Activated CD4-positive, alpha-beta T cell treated with anti-CD3 and anti-CD28 coated beads for 36 hours (primary cell): ENCODE measurements at regions of chr1 and their contacts with region 1.

Region 1: GRCh38 chr1:24201941-24202440 is 14.9 kb upstream of the IFNLR1 start:
- DNase-seq: peak; percentile 78
- ATAC-seq: no peak
- H3K4me3 Mint-ChIP-seq: no peak overlapping the region
- H3K27ac Mint-ChIP-seq: no peak overlapping the region
- H3K4me1 Mint-ChIP-seq: peaks cover 27% of the 10 kb centered on the region
- H3K27me3 Mint-ChIP-seq: peaks cover 2% of the 10 kb centered on the region

Region 2: GRCh38 chr1:24070821-24071393 is 131.1 kb before region 1 on chr1:
- CTCF ChIA-PET with region 1: interaction called, 5 read pairs
- POLR2A ChIA-PET with region 1: no interaction called
- intact Hi-C with region 1: loop called in 1 of 2 experiments (anchors 2 kb)
- DNase-seq: peak; percentile 87
- ATAC-seq: peak; percentile 97
- H3K4me3 Mint-ChIP-seq: no peak overlapping the region
- H3K27ac Mint-ChIP-seq: no peak overlapping the region
- H3K4me1 Mint-ChIP-seq: peaks cover 4% of the 10 kb centered on the region
- H3K27me3 Mint-ChIP-seq: peaks cover 6% of the 10 kb centered on the region

Region 3: DNA sequence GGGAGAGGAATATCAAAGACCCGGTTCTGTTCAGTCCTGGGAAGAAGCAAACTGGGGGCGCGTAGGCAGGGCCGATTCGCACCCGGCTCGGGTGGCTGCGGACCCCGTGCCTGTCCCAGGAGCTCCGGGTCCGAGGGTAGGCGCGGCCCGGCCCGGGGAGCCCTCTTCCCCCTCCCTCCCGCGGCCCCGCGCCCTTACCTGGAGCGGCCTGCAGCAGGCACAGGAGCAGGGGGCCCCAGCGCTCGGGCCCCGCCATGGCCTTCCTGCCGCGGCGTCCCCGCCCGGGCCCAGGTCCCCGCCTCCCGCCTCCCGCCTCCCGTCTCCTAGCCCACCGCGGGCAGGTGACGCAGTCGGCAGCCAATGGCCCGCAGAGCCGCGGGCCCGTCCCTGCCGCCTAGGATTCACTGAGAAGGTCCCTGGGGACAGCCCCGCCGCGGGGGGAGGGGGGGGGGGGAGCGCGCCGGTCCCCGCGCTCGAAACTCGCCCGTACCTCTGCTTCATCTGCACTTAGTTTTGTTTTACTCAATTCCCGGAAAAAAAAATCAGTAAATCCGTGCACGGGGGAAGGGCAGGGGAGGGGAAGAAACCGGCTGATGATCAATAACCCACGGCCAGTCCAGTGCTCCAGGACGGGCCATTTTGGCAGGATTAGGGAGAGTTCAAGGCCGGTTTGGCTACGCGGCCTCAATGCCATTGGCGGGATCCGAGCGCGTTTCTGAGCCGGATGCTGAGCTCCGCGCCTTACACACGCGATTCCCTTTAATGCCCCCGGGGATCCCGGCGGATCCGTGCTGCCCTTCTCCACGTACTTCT is 14.8 kb before region 1 on chr1 and contains the start of gene IFNLR1:
- CTCF ChIA-PET with region 1: interaction called, 22 read pairs
- POLR2A ChIA-PET with region 1: no interaction called
- intact Hi-C with region 1: no loop called
- DNase-seq: peak; percentile 93
- ATAC-seq: peak; percentile 88
- H3K4me3 Mint-ChIP-seq: peak within 1 kb of the TSS; percentile 73
- H3K27ac Mint-ChIP-seq: peak within 1 kb of the TSS; percentile 71
- H3K4me1 Mint-ChIP-seq: peaks cover 47% of the 10 kb centered on the region
- H3K27me3 Mint-ChIP-seq: no peaks in the 10 kb centered on the region
- total RNA-seq, gene IFNLR1: 6.6 to 7.4 TPM

Region 4: DNA sequence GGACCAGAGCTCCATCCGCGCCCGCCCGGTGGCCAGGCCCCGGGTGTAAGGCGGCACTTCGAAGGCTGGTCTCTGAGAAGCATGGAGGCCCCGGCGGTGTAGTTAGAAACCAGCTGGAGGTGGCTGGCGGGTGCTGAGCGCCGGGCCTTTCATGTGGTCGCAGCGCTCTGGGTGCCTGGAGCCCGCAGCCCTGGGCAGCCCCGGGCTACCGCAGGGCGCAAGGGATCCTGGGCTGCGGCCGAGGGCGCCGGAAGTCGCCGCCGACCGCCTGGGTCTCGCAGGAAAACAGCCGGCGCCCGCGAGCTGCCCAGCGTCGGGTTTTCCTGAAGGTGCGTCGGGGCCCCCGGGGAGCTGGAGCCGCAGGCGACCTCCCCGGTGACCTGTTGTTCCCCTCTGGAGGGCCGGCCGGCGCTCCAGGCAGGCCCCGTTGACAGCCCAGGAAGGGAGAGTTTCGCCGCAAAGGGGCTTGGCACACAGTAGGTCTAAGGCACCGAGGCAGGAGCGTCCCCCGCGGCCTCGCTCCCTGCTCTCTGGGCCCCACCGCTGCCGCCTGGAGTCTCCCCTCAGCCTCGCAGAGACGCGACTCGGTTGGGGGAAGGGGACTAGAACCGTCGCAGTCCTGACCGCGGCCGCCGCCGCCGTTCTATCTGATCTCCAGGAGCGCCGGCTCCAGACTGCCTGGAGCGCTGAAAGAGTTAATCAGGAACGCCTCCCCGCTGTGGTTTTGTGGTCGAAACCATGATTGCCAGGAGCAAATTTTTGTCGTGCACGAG is 119.9 kb after region 1 on chr1:
- CTCF ChIA-PET with region 1: interaction called, 22 read pairs
- POLR2A ChIA-PET with region 1: no interaction called
- intact Hi-C with region 1: loop called (anchors 5 kb)
- DNase-seq: peak; percentile 87
- ATAC-seq: peak; percentile 76
- H3K4me3 Mint-ChIP-seq: peak overlapping the region; percentile 62
- H3K27ac Mint-ChIP-seq: peak overlapping the region; percentile 51
- H3K4me1 Mint-ChIP-seq: peaks cover 40% of the 10 kb centered on the region
- H3K27me3 Mint-ChIP-seq: peaks cover 70% of the 10 kb centered on the region

Region 5: DNA sequence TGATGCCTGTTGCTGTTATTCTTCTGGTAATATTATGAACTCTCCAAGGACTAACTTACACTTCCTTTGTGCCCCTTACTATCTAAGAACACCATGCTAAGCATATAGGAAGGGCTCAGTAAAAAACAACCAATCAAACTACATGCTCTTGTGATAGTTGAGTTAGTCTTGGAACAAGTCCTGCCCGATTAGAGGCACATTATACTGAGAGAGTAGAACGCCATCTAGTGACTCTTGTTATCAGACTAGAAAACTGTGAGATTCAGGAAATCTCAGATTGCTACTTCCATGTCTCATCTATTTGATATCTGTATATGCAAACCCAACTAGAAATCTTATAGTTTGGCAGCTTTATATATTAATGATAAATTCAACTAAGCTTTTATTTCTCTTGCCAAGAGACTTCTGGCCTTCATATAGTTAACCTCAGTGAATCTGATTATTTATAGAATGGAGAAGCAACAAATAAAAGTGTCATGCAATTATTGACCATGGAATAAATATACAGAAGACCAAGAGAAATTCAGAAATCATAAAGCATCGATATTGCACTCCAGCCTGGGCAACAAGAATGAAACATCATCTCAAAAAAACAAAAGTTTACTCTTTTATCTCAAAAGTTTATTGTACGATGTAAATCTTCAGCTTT is 433.3 kb after region 1 on chr1:
- CTCF ChIA-PET with region 1: interaction called, 3 read pairs
- POLR2A ChIA-PET with region 1: no interaction called
- intact Hi-C with region 1: loop called (anchors 1 to 2 kb)
- DNase-seq: no peak
- ATAC-seq: peak; percentile 84
- H3K4me3 Mint-ChIP-seq: no peak overlapping the region
- H3K27ac Mint-ChIP-seq: no peak overlapping the region
- H3K4me1 Mint-ChIP-seq: peaks cover 12% of the 10 kb centered on the region
- H3K27me3 Mint-ChIP-seq: peaks cover 2% of the 10 kb centered on the region